CD8-positive, alpha-beta memory T cell (primary cell): ENCODE measurements at regions of chr6 and their contacts with region 1.

Region 1: DNA sequence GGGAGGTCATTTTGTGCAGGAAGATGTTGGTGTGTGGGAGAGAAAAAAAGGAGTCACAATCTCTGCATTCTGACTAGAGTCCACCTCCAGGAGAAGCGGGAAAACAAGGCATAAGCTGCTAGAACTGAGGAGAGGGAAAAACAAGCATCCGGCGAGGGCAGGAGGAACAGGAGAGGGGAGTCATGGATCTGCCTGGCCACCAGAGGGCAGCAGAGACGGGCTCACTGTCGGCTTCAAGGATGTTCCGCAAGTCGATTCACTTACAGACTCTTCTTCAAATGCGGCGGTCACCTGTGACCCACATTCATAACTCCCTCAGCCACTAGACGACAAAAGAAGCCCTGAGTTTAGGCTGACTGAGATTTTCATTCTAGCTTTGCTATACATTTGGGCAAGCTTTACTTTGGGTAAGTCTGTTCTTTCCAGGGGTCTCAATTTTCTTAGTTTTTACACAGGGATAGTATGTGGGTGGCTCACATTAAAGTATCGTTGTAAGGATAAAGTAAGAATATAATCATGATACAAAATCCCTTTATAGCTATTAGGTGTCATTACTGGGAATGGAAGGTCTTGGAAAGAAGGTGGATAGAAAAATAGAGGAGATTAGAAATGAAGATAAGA is 6.6 kb upstream of the BTNL2 start:
- DNase-seq: peak; percentile 72 to 87 (median 77)
- H3K4me3 ChIP-seq: no peak overlapping the region
- H3K4me3 Mint-ChIP-seq: no peak overlapping the region
- H3K27ac ChIP-seq: no peak overlapping the region
- H3K27ac Mint-ChIP-seq: no peak overlapping the region
- H3K4me1 ChIP-seq: no peaks in the 10 kb centered on the region
- H3K4me1 Mint-ChIP-seq: peaks cover 9 to 13% (median 11%) of the 10 kb centered on the region in 3 donors
- H3K27me3 ChIP-seq: peaks cover 20% of the 10 kb centered on the region
- H3K27me3 Mint-ChIP-seq: peaks cover 30 to 57% of the 10 kb centered on the region in 2 donors

Region 2: GRCh38 chr6:32402812-32403211 is 10.7 kb before region 1 on chr6:
- CTCF ChIA-PET with region 1: interaction called, 16 read pairs
- POLR2A ChIA-PET with region 1: no interaction called
- DNase-seq: no peak
- H3K4me3 ChIP-seq: no peak overlapping the region
- H3K4me3 Mint-ChIP-seq: no peak overlapping the region
- H3K27ac ChIP-seq: no peak overlapping the region
- H3K27ac Mint-ChIP-seq: no peak overlapping the region
- H3K4me1 ChIP-seq: no peaks in the 10 kb centered on the region
- H3K4me1 Mint-ChIP-seq: no peaks in the 10 kb centered on the region
- H3K27me3 ChIP-seq: peaks cover 15% of the 10 kb centered on the region
- H3K27me3 Mint-ChIP-seq: peaks cover 30 to 72% of the 10 kb centered on the region in 2 donors

Region 3: DNA sequence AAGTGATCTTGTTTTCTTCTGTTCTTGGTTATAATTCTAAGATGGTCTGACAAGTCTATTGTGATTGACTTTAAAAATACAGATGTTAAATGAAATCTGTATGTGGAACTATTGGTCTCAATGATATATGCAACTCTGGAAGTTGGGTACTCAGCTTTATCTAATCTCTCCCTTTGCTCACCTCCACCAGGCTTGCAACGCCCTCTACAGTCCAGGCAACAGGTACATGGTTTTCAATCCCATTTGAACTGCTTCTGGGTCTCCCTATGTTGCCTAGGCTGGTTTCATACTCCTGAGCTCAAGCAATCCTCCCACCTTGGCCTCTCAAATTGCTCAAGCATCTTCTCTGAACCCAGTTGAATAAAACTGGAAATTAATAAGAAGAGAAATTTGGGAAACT is 278.5 kb after region 1 on chr6:
- CTCF ChIA-PET with region 1: interaction called, 17 read pairs
- POLR2A ChIA-PET with region 1: no interaction called
- DNase-seq: peak in 4 of 5 donors; percentile 24 to 80 (median 54)
- H3K4me3 ChIP-seq: no peak overlapping the region
- H3K4me3 Mint-ChIP-seq: no peak overlapping the region
- H3K27ac ChIP-seq: no peak overlapping the region
- H3K27ac Mint-ChIP-seq: peak overlapping the region in 1 of 8 donors; percentile 46
- H3K4me1 ChIP-seq: peaks cover 8% of the 10 kb centered on the region
- H3K4me1 Mint-ChIP-seq: peaks cover 9 to 23% (median 11%) of the 10 kb centered on the region in 3 donors
- H3K27me3 ChIP-seq: no peaks in the 10 kb centered on the region
- H3K27me3 Mint-ChIP-seq: peaks cover 16 to 32% of the 10 kb centered on the region in 2 donors

Region 4: DNA sequence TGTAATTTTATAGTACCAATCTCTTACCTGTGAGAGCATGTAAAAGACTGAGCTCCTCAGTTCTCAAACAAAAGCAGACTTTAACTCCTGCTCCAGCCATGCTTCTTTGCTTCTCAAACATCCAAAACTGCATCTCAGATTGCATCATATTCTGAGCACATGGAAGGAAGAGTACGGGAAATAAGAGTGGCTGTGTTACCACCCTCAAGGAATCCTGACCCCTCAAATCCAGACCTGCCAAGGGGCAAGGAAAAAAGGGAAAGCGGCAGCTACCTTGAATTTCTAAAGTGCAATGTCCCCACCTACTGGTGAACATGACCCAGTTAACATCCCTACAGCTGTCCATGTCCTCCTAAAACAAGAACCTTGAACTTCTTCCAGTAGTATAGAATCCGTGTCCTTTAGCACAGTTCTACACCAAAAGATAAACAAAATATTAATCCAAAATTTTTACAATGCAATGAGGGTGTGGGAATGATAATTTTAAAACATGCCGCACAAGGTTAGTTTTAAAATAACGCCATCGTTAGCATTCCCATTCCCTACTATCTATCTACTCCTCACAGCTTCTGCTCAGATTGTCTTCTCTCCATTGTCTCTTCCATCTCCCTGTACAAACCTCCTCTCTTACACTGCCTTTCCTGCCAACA is 287.0 kb after region 1 on chr6:
- CTCF ChIA-PET with region 1: interaction called, 42 read pairs
- POLR2A ChIA-PET with region 1: interaction called, 3 read pairs
- DNase-seq: peak in 3 of 5 donors; percentile 23 to 53 (median 31)
- H3K4me3 ChIP-seq: no peak overlapping the region
- H3K4me3 Mint-ChIP-seq: no peak overlapping the region
- H3K27ac ChIP-seq: no peak overlapping the region
- H3K27ac Mint-ChIP-seq: peak overlapping the region in 2 of 8 donors; percentile 2 to 16
- H3K4me1 ChIP-seq: no peaks in the 10 kb centered on the region
- H3K4me1 Mint-ChIP-seq: peaks cover 0 to 23% (median 4%) of the 10 kb centered on the region in 3 donors
- H3K27me3 ChIP-seq: no peaks in the 10 kb centered on the region
- H3K27me3 Mint-ChIP-seq: peaks cover 35 to 53% of the 10 kb centered on the region in 2 donors

Region 5: DNA sequence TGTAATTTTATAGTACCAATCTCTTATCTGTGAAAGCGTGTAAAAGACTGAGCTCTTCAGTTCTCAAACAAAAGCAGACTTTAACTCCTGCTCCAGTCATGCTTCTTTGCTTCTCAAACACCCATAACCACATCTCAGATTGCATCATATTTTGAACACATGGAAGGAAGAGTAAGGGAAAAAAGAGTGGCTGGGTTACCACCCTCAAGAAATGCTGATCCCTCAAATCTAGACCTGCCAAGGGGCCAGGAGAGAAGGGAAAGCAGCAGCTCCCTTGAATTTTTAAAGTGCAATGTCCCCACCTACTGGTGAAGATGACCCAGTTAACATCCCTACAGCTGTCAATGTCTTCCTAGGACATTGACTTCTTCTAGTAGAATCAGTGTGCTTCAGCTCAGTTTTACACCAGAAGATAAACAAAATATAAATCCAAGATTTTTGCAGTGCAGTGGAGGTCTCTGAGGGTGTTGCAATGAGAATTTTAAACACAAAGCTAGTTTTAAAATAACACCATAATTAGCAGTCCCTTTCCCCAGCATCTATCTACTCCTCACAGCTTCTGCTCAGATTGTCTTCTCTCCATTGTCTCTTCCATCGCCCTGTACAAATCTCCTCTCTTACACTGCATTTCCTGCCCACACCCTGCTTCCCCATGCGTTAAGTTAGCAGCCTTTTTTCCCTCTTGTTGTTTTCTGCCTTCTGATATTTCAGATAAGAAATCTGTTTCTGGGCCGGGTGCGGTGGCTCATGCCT is 372.4 kb after region 1 on chr6:
- CTCF ChIA-PET with region 1: interaction called, 46 read pairs
- POLR2A ChIA-PET with region 1: no interaction called
- DNase-seq: peak in 3 of 5 donors; percentile 3 to 34 (median 28)
- H3K4me3 ChIP-seq: no peak overlapping the region
- H3K4me3 Mint-ChIP-seq: no peak overlapping the region
- H3K27ac ChIP-seq: no peak overlapping the region
- H3K27ac Mint-ChIP-seq: peak overlapping the region in 2 of 8 donors; percentile 4 to 8
- H3K4me1 ChIP-seq: no peaks in the 10 kb centered on the region
- H3K4me1 Mint-ChIP-seq: no peaks in the 10 kb centered on the region
- H3K27me3 ChIP-seq: peaks cover 11% of the 10 kb centered on the region
- H3K27me3 Mint-ChIP-seq: peaks cover 40 to 70% of the 10 kb centered on the region in 2 donors

Region 6: DNA sequence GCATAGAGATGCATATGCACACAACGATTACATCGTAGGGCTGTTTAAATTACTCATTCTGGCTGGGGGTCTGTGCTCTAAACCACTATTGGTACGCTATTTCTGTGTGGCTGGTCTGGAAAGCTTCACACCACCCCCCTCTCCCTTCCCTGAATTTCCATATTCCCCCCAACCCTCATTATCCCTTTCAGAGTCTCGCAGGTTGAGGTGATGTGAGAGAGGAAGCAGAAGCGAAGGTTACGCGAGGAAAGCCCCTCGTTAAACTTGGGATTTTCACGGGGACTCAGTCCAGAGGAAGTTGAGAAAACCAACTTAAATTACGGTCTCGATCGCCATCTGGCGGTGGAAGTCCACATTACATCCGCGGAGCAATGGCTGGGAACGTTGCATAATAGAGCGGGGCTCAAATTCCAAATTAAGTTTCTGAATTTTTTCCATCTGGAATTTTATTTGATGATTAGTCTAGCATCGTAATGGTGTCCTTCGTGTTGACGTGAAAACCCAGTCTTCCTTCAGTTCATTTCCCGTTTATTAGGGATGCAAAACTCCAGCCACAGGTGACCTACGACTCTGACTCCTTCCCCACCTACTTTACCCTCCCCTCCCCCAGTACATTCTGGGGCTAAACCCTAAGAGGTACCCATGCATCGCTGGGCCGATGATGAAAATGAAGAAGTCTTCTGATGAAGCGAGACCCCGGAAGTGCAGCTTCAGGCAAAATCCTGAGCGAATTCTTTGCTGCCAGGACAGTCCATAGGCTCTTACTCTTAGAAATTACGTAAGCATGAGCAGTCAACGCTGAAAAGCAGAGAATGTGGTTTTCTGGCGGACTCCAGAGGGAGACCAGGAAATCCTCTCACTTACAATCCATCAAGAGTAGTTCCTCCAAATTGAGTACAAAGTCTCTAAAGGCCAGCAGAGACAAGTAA is 383.6 kb after region 1 on chr6:
- CTCF ChIA-PET with region 1: interaction called, 14 read pairs
- POLR2A ChIA-PET with region 1: no interaction called
- DNase-seq: peak; percentile 58 to 79 (median 72)
- H3K4me3 ChIP-seq: peak overlapping the region; percentile 20
- H3K4me3 Mint-ChIP-seq: peak overlapping the region in 6 of 7 donors; percentile 53 to 74 (median 59)
- H3K27ac ChIP-seq: no peak overlapping the region
- H3K27ac Mint-ChIP-seq: peak overlapping the region in 1 of 8 donors; percentile 19
- H3K4me1 ChIP-seq: peaks cover 8% of the 10 kb centered on the region
- H3K4me1 Mint-ChIP-seq: peaks cover 10 to 11% (median 10%) of the 10 kb centered on the region in 3 donors
- H3K27me3 ChIP-seq: no peaks in the 10 kb centered on the region
- H3K27me3 Mint-ChIP-seq: peaks cover 26 to 75% of the 10 kb centered on the region in 2 donors